Endothelial cell of umbilical vein (primary cell): ENCODE measurements at regions of chr9 and their contacts with region 1.

Region 1: GRCh38 chr9:78144663-78145377 is 91.1 kb upstream of the CEP78 start:
- DNase-seq: peak; percentile 98
- H3K4me3 ChIP-seq: no peak overlapping the region
- H3K27ac ChIP-seq: peak overlapping the region; percentile 78
- H3K4me1 ChIP-seq: peaks cover 12% of the 10 kb centered on the region
- H3K27me3 ChIP-seq: no peaks in the 10 kb centered on the region
- CTCF ChIP-seq: no peak
- POLR2A ChIP-seq: no peak

Region 2: GRCh38 chr9:78130004-78130403 is 14.8 kb before region 1 on chr9:
- CTCF ChIA-PET with region 1: interaction called, 14 read pairs
- POLR2A ChIA-PET with region 1: no interaction called
- dilution Hi-C with region 1: no loop called
- intact Hi-C with region 1: no loop called
- DNase-seq: peak; percentile 87
- H3K4me3 ChIP-seq: no peak overlapping the region
- H3K27ac ChIP-seq: no peak overlapping the region
- H3K4me1 ChIP-seq: peaks cover 11% of the 10 kb centered on the region
- H3K27me3 ChIP-seq: no peaks in the 10 kb centered on the region
- CTCF ChIP-seq: peak; percentile 36 to 55
- POLR2A ChIP-seq: no peak

Region 3: DNA sequence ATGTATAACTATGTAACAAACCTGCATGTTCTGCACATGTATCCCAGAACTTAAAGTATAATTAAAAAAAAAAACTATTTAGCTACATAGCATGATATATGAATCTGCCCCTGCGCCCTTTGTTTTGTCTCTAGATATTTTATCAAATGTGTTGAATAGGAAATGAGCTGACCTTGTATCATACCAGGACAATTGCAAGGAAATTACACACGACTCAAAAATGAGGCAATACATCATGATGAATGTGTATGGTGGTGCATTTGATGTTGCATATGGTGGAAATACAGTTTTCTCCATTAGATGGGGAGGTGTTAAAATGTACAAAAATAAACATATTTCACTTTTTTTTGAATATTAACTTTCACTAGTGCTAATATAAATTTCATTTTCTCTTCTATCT is 62.5 kb after region 1 on chr9:
- CTCF ChIA-PET with region 1: no interaction called
- POLR2A ChIA-PET with region 1: no interaction called
- dilution Hi-C with region 1: no loop called
- intact Hi-C with region 1: loop called (anchors 1 kb)
- DNase-seq: peak; percentile 86
- H3K4me3 ChIP-seq: no peak overlapping the region
- H3K27ac ChIP-seq: peak overlapping the region; percentile 87
- H3K4me1 ChIP-seq: peaks cover 9% of the 10 kb centered on the region
- H3K27me3 ChIP-seq: no peaks in the 10 kb centered on the region
- CTCF ChIP-seq: no peak
- POLR2A ChIP-seq: peak; percentile 39